PC-9 (cell line): ENCODE measurements at regions of chr14 and their contacts with region 1.

Region 1: GRCh38 chr14:67426983-67427606 is 15.1 kb upstream of the PLEK2 start:
- DNase-seq: peak; percentile 74 to 76
- H3K4me3 ChIP-seq: no peak overlapping the region
- H3K27ac ChIP-seq: no peak overlapping the region
- H3K4me1 ChIP-seq: peaks cover 29% of the 10 kb centered on the region
- H3K27me3 ChIP-seq: no peaks in the 10 kb centered on the region
- CTCF ChIP-seq: peak; percentile 93

Region 2: GRCh38 chr14:66495218-66496098 is 931.6 kb before region 1 on chr14:
- CTCF ChIA-PET with region 1: no interaction called
- POLR2A ChIA-PET with region 1: no interaction called
- intact Hi-C with region 1: no loop called
- DNase-seq: peak; percentile 33 to 62
- H3K4me3 ChIP-seq: no peak overlapping the region
- H3K27ac ChIP-seq: no peak overlapping the region
- H3K4me1 ChIP-seq: no peaks in the 10 kb centered on the region
- H3K27me3 ChIP-seq: no peaks in the 10 kb centered on the region
- CTCF ChIP-seq: peak; percentile 85

Region 3: GRCh38 chr14:67457782-67458181 is 30.7 kb after region 1 on chr14:
- CTCF ChIA-PET with region 1: interaction called, 4 read pairs
- POLR2A ChIA-PET with region 1: interaction called, 30 read pairs
- intact Hi-C with region 1: no loop called
- DNase-seq: peak; percentile 37 to 38
- H3K4me3 ChIP-seq: no peak overlapping the region
- H3K27ac ChIP-seq: no peak overlapping the region
- H3K4me1 ChIP-seq: peaks cover 15% of the 10 kb centered on the region
- H3K27me3 ChIP-seq: no peaks in the 10 kb centered on the region
- CTCF ChIP-seq: no peak

Region 4: DNA sequence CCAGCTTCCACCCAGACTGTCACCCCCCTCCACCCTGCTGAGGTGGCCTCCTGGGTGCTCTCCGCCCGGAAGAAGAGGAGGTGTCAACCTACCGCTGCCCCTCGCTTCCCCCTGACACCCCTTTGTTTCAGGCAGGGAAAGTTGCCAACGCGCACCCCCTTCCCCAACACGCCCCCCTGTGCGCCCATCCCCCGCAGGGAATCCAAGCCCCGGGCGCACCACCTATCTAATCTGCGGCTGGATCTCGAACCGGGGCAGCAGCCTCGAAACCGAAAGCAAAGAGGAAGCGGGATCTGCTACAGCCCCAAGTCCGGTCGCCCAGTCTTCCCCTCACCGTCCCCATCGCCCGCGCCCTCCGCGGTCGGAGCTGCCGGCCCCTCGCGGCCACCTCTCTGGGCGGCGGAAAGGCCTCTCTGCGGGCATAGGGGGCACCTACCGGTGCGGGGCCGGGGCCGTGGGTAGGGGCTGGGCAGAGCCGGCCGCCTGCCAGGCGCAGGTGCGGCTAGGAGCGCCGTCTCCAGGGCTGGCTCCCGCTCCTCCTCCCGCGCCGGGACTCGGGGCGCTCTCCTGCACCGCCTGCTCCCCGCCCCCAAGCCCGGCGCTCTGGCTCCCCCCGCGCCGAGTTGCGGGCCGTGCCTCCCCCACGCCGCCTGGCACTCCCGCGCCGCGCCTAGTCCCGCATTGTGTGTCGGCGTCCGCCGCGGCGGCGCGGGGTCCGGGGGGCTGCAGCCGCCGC is 87.7 kb after region 1 on chr14:
- CTCF ChIA-PET with region 1: interaction called, 11 read pairs
- POLR2A ChIA-PET with region 1: no interaction called
- intact Hi-C with region 1: no loop called
- DNase-seq: peak in 1 of 2 experiments; percentile 44
- H3K4me3 ChIP-seq: peak overlapping the region; percentile 84
- H3K27ac ChIP-seq: no peak overlapping the region
- H3K4me1 ChIP-seq: peaks cover 25% of the 10 kb centered on the region
- H3K27me3 ChIP-seq: peaks cover 40% of the 10 kb centered on the region; the same call in 1 of the 2 replicates
- CTCF ChIP-seq: 0 out of 2 replicates have a peak, but pooled peaks have one; percentile 13

Region 5: GRCh38 chr14:67526676-67527459 is 99.8 kb after region 1 on chr14:
- CTCF ChIA-PET with region 1: interaction called, 15 read pairs
- POLR2A ChIA-PET with region 1: no interaction called
- intact Hi-C with region 1: loop called (anchors 1 kb)
- DNase-seq: peak; percentile 43 to 47
- H3K4me3 ChIP-seq: no peak overlapping the region
- H3K27ac ChIP-seq: no peak overlapping the region
- H3K4me1 ChIP-seq: no peaks in the 10 kb centered on the region
- H3K27me3 ChIP-seq: peaks cover 17% of the 10 kb centered on the region; the same call in 1 of the 2 replicates
- CTCF ChIP-seq: peak; percentile 82

Region 6: DNA sequence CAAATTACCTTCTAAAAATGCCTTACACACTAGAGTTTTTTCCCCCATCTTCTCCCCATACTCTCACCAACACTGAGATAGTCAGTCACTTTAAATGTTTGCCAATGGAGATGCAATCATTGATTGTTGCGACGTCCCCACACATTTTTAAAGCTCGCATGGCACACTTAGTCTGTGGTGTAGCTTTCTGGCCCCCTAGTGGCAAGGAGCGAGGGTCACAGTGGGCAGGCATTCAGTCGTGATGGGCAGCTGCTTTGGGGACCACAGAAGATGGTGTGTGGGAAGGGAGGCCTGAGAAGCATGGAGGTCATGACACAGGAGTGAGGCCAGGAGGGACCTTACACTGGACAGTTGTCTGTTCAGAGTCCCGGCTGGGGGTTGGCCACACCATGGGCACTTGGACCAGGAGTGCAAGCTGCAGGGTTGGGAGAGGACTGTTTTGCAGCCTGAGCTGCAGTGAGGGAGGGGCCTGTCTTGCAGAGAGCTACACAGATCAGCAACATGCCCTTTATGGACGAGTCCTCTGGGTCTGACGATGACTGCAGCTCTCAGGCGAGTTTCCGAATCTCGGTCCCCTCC is 144.3 kb after region 1 on chr14:
- CTCF ChIA-PET with region 1: interaction called, 44 read pairs
- POLR2A ChIA-PET with region 1: no interaction called
- intact Hi-C with region 1: loop called (anchors 1 kb)
- DNase-seq: peak; percentile 40 to 60
- H3K4me3 ChIP-seq: no peak overlapping the region
- H3K27ac ChIP-seq: no peak overlapping the region
- H3K4me1 ChIP-seq: peaks cover 8% of the 10 kb centered on the region; the same call in 1 of the 2 replicates
- H3K27me3 ChIP-seq: no peaks in the 10 kb centered on the region
- CTCF ChIP-seq: peak; percentile 97